A549 (cell line): ENCODE measurements at regions of chr3 and their contacts with region 1.

Region 1: DNA sequence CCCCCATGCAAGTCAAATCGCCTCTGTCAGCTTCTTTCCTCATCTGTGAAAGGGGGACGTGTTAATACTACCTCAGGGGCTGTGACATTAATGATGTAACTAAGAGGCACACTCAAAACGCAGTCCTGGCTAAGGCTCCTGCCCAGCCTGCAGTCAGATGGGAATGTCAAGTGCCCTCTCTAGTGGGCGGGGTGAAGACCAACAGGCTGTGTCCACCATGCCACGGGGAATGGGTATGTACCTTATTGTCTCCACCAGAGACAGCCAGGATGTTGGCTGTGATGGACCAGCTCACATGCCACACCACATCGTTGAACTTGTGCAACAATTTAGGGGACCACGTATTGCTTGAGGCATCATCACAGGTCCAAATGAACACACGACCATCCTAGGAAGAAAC is 11.0 kb upstream of the GHRL start:
- DNase-seq: no peak
- ATAC-seq: peak; percentile 52 to 63; a peak in 5 of 6 replicates
- H3K4me3 ChIP-seq: no peak overlapping the region
- H3K27ac ChIP-seq: no peak overlapping the region
- H3K4me1 ChIP-seq: peaks cover 4% of the 10 kb centered on the region; the same call in 1 of the 3 replicates
- CTCF ChIP-seq: no peak
- EP300 ChIP-seq: no peak
- POLR2A ChIP-seq: no peak
- RAD21 ChIP-seq: no peak

Region 2: GRCh38 chr3:10315771-10316344 is 12.1 kb after region 1 on chr3:
- CTCF ChIA-PET with region 1: interaction called, 19 read pairs
- POLR2A ChIA-PET with region 1: no interaction called
- DNase-seq: no peak
- ATAC-seq: no peak
- H3K4me3 ChIP-seq: no peak overlapping the region
- H3K27ac ChIP-seq: no peak overlapping the region
- H3K4me1 ChIP-seq: peaks cover 5% of the 10 kb centered on the region; the same call in 2 of the 3 replicates
- CTCF ChIP-seq: no peak
- EP300 ChIP-seq: no peak
- POLR2A ChIP-seq: no peak
- RAD21 ChIP-seq: no peak